WTC11 (cell line): ENCODE measurements at regions of chr2 and their contacts with region 1.

Region 1: GRCh38 chr2:71798266-71799012 is 345.1 kb downstream of the DYSF start:
- DNase-seq: peak; percentile 76
- ATAC-seq: peak; percentile 84
- H3K4me3 Mint-ChIP-seq: no peak overlapping the region
- H3K27ac Mint-ChIP-seq: no peak overlapping the region
- H3K4me1 Mint-ChIP-seq: no peaks in the 10 kb centered on the region
- H3K27me3 Mint-ChIP-seq: no peaks in the 10 kb centered on the region
- CTCF ChIP-seq: peak; percentile 87

Region 2: DNA sequence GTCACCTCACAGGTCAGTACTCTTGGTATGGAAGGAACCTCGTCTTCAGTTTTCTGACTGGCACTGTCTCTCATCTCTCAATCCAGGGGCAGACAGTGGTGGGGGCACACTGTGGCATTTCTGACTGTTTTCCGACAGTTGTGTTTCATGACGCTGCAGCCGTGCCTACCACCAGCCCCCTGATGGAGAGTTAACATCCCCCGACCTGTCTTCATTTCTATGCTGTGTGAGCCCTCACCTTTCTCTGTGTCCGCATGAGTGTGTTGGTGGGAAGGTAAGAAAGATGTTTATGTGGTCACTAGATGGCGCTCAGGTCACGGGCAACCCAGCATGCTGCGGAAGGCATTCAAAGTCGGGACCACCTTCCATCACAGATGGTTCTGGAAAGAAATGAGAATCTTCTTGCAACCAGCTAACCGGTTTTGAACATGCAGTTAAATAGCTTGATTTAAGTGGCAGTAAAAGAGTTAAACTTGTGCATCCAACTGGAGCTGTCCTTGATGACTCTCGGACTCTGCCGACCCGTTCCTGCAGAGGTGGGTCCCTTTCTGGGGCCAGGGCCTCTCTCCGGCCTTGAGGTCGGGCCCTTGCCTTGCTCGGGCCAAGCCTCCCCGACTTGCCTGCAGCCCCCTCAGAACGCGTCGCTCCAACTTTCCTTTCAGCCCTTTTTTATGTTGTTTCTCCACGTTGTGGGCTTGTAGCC is 252.7 kb before region 1 on chr2:
- CTCF ChIA-PET with region 1: interaction called, 26 read pairs
- POLR2A ChIA-PET with region 1: no interaction called
- DNase-seq: peak; percentile 69
- ATAC-seq: peak; percentile 92
- H3K4me3 Mint-ChIP-seq: no peak overlapping the region
- H3K27ac Mint-ChIP-seq: no peak overlapping the region
- H3K4me1 Mint-ChIP-seq: no peaks in the 10 kb centered on the region
- H3K27me3 Mint-ChIP-seq: no peaks in the 10 kb centered on the region; the same call in none of the 2 replicates
- CTCF ChIP-seq: peak; percentile 61

Region 3: DNA sequence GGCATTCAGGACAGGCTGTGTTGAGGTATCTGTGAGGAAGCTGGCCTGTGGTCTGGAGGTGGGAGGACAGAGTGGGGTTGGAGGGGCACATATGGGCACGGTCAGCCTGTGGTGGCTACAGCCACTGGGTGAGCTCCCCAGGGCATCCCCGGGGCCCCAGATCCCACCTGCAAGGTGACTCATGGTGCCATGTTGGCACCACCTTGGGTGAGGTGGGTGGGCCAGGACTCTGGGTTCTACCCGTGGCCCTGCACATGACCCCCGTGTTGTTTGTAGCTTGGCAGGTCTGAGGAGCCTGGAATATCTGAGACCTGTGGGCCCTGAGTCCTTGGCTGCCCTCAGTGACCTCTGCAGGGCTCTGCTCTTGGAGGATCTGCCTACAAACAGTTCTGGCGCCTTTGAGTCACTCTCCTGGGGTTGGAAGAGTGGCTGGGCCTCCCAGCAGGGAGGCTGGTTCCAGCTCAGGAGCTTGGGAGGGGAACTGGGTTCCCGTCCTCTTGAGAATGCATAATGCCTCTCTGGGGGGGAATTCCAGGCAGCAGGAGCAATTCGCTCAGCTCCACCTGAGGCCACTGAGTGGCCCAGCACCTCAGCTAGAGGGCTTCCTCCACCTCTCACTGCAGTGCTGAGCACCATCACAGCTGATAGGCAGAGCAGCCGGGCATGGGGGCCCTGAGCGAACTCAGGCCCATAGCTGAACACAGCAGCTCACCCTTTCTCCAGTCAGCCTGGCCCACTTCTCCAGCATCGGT is 240.0 kb before region 1 on chr2:
- CTCF ChIA-PET with region 1: interaction called, 31 read pairs
- POLR2A ChIA-PET with region 1: no interaction called
- DNase-seq: no peak
- ATAC-seq: no peak; the same call in 1 of the 2 replicates
- H3K4me3 Mint-ChIP-seq: no peak overlapping the region
- H3K27ac Mint-ChIP-seq: no peak overlapping the region
- H3K4me1 Mint-ChIP-seq: peaks cover 16% of the 10 kb centered on the region
- H3K27me3 Mint-ChIP-seq: no peaks in the 10 kb centered on the region
- CTCF ChIP-seq: no peak

Region 4: DNA sequence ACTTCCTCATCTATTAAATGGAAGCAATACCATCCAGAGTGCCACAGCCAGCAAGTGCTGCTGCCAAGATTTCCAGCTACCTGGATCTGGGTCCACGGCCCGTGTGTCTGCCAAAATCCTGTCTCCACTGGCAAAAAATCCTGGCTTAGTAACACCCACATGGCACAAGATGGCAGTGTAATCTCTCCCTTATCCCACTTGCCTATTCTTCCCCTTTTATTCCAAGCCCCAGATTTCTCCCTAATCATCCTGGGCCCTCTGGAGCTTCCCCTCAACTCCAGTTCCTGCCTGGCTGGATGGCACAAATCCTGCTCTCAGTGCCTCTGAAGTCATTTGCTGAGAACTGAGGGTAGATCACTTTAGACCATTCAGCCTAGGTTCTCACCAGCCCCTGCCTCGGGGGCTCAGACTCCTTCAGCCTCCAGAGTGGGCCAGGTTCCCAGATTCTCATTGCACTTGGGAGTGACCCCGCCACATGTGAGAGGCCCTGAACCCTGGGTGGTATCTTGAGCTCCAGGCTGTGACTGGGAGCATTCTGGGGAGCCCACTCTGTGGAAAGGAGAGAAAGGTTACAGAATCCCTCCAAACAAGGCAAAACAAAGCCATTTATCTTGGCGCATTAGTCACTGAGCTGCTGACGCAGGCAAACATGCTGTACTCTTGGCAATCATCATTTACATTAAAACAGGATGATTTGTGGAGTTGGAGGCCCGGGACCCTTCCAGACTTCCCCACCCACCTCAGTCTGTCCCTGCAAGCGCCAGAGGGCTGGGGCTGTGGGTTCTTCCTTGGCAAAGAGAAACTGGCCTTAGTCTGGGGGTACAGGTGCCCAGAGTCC is 19.3 kb before region 1 on chr2:
- CTCF ChIA-PET with region 1: interaction called, 14 read pairs
- POLR2A ChIA-PET with region 1: interaction called, 3 read pairs
- DNase-seq: no peak
- ATAC-seq: peak; percentile 60
- H3K4me3 Mint-ChIP-seq: no peak overlapping the region
- H3K27ac Mint-ChIP-seq: no peak overlapping the region
- H3K4me1 Mint-ChIP-seq: no peaks in the 10 kb centered on the region
- H3K27me3 Mint-ChIP-seq: no peaks in the 10 kb centered on the region; the same call in none of the 2 replicates
- CTCF ChIP-seq: no peak

Region 5: GRCh38 chr2:71923887-71924533 is 125.6 kb after region 1 on chr2:
- CTCF ChIA-PET with region 1: interaction called, 10 read pairs
- POLR2A ChIA-PET with region 1: no interaction called
- DNase-seq: peak; percentile 86
- ATAC-seq: peak; percentile 99
- H3K4me3 Mint-ChIP-seq: no peak overlapping the region
- H3K27ac Mint-ChIP-seq: no peak overlapping the region
- H3K4me1 Mint-ChIP-seq: no peaks in the 10 kb centered on the region
- H3K27me3 Mint-ChIP-seq: no peaks in the 10 kb centered on the region
- CTCF ChIP-seq: peak; percentile 89

Region 6: GRCh38 chr2:72027426-72028161 is 229.2 kb after region 1 on chr2:
- CTCF ChIA-PET with region 1: no interaction called
- POLR2A ChIA-PET with region 1: no interaction called
- DNase-seq: peak; percentile 28
- ATAC-seq: peak; percentile 49; the same call in 1 of the 2 replicates
- H3K4me3 Mint-ChIP-seq: no peak overlapping the region
- H3K27ac Mint-ChIP-seq: no peak overlapping the region
- H3K4me1 Mint-ChIP-seq: peaks cover 3% of the 10 kb centered on the region; the same call in 1 of the 2 replicates
- H3K27me3 Mint-ChIP-seq: no peaks in the 10 kb centered on the region
- CTCF ChIP-seq: no peak

Region 7: DNA sequence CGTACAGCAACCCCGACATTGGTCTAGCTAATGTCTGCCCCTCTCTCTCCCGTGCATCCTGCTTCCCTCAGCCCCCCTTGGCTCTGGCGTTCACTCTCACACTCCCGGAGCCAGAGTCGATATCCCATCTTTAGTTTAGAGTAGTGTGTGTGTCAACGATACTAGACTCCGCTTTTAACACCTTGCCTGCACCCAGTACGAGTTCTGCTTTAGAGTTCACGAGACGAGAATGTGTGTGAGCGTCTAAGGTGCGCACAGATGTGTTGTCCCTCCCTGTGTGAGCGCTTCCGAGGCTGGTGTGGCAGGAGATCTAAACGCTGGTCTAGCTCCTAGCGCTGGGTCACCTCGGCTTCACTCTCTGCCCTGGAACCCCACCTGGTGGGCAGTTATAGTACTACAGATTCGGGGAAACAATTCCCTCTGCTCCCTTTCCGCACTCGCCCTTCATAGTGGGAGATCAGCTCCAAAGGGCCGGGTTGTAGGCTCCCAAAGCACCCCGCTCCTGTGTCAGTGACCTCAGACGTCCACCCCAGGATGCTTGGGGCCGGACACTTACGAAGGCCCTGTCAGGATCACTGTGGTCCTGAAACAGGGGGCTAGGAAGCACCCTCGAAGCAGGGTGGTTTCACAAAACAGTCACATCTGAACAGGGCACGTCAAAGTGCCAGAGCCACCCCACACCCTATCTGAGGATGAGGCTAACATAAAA is 351.9 kb after region 1 on chr2:
- CTCF ChIA-PET with region 1: interaction called, 35 read pairs
- POLR2A ChIA-PET with region 1: no interaction called
- DNase-seq: peak; percentile 85
- ATAC-seq: peak; percentile 56
- H3K4me3 Mint-ChIP-seq: peak overlapping the region; percentile 79
- H3K27ac Mint-ChIP-seq: no peak overlapping the region
- H3K4me1 Mint-ChIP-seq: peaks cover 31% of the 10 kb centered on the region
- H3K27me3 Mint-ChIP-seq: peaks cover 78% of the 10 kb centered on the region
- CTCF ChIP-seq: peak; percentile 83

Region 8: DNA sequence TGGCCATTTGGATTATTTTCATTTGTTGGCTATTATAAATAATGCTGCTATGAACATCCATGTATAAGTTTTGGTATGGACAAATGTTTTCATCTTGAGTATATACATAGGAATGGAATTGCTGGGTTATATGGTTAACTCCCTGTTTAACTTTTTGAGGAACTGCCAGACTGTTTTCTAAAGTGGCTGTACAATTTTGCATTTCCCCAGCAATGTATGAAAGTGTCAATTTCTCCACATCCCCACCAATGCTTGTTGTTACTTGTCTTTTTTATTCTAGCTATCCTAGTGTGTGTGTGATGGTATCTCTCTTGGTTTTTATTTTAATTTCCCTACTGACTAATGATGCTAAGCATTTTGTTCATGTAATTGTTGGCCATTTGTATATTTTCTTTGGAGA is 439.9 kb after region 1 on chr2:
- CTCF ChIA-PET with region 1: no interaction called
- POLR2A ChIA-PET with region 1: no interaction called
- DNase-seq: no peak
- ATAC-seq: no peak
- H3K4me3 Mint-ChIP-seq: no peak overlapping the region
- H3K27ac Mint-ChIP-seq: no peak overlapping the region
- H3K4me1 Mint-ChIP-seq: peaks cover 13% of the 10 kb centered on the region
- H3K27me3 Mint-ChIP-seq: no peaks in the 10 kb centered on the region
- CTCF ChIP-seq: no peak